SK-N-SH (cell line): ENCODE measurements at regions of chrX and their contacts with region 1.

Region 1: GRCh38 chrX:78024349-78025108 is 55.1 kb upstream of the PGAM4 start:
- DNase-seq: peak; percentile 30
- H3K4me3 ChIP-seq: no peak overlapping the region
- H3K27ac ChIP-seq: no peak overlapping the region
- H3K4me1 ChIP-seq: no peaks in the 10 kb centered on the region; a peak in 1 of 4 replicates
- H3K27me3 ChIP-seq: no peaks in the 10 kb centered on the region
- CTCF ChIP-seq: peak; percentile 62
- EP300 ChIP-seq: no peak
- RAD21 ChIP-seq: peak; percentile 68

Region 2: GRCh38 chrX:77820091-77820727 is 204.3 kb before region 1 on chrX:
- CTCF ChIA-PET with region 1: no interaction called
- POLR2A ChIA-PET with region 1: no interaction called
- DNase-seq: no peak
- H3K4me3 ChIP-seq: no peak overlapping the region
- H3K27ac ChIP-seq: no peak overlapping the region
- H3K4me1 ChIP-seq: no peaks in the 10 kb centered on the region
- H3K27me3 ChIP-seq: no peaks in the 10 kb centered on the region
- CTCF ChIP-seq: no peak
- EP300 ChIP-seq: no peak
- RAD21 ChIP-seq: no peak

Region 3: DNA sequence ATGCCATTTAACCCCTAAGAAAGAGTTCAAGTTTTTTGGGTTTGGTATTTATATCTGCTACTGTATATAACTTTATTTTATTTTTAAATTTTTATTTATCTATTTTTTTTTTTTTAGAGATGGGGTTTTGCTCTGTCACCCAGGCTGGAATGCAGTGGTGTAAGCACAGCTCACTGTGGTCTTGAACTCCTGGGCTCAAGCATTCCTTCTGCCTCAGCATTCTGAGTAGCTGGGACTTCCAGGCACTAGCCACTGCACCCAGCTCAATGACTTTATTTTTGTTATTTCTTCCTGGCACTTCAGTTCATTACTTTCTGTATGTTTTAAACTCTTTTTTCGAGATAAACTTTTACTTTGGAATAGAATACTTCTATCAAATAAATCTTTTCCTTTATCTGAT is 12.7 kb before region 1 on chrX:
- CTCF ChIA-PET with region 1: interaction called, 12 read pairs
- POLR2A ChIA-PET with region 1: no interaction called
- DNase-seq: no peak
- H3K4me3 ChIP-seq: no peak overlapping the region
- H3K27ac ChIP-seq: no peak overlapping the region
- H3K4me1 ChIP-seq: no peaks in the 10 kb centered on the region
- H3K27me3 ChIP-seq: no peaks in the 10 kb centered on the region
- CTCF ChIP-seq: no peak
- EP300 ChIP-seq: no peak
- RAD21 ChIP-seq: no peak